ENCODE measurements at regions of chr2 and their contacts with region 1.

Region 1: GRCh38 chr2:101831351-101831865 is 133.9 kb downstream of the MAP4K4 start:
- DNase-seq: peak; percentile 46 to 78
- ATAC-seq: peak; percentile 92 to 94
- H3K4me3 ChIP-seq: no peak overlapping the region
- H3K27ac ChIP-seq: peak overlapping the region; percentile 23 to 70; a peak in 5 of 6 replicates
- H3K4me1 ChIP-seq: peaks cover 44% of the 10 kb centered on the region
- CTCF ChIP-seq: peak; percentile 84
- EP300 ChIP-seq: no peak
- POLR2A ChIP-seq: no peak
- RAD21 ChIP-seq: peak; percentile 75 to 79

Region 2: GRCh38 chr2:101419096-101419663 is 412.2 kb before region 1 on chr2:
- CTCF ChIA-PET with region 1: interaction called, 79 read pairs
- POLR2A ChIA-PET with region 1: no interaction called
- DNase-seq: peak; percentile 53 to 70
- ATAC-seq: peak; percentile 85 to 94; a peak in 5 of 6 replicates
- H3K4me3 ChIP-seq: no peak overlapping the region
- H3K27ac ChIP-seq: peak overlapping the region; percentile 1 to 52; a peak in 4 of 6 replicates
- H3K4me1 ChIP-seq: no peaks in the 10 kb centered on the region
- CTCF ChIP-seq: peak; percentile 90
- EP300 ChIP-seq: no peak
- POLR2A ChIP-seq: no peak
- RAD21 ChIP-seq: peak; percentile 92 to 94

Region 3: GRCh38 chr2:101473911-101474701 is 357.3 kb before region 1 on chr2:
- CTCF ChIA-PET with region 1: no interaction called
- POLR2A ChIA-PET with region 1: no interaction called
- DNase-seq: no peak
- ATAC-seq: peak in 1 of 2 experiments; percentile 40; a peak in 3 of 6 replicates
- H3K4me3 ChIP-seq: no peak overlapping the region
- H3K27ac ChIP-seq: no peak overlapping the region
- H3K4me1 ChIP-seq: no peaks in the 10 kb centered on the region
- CTCF ChIP-seq: no peak
- EP300 ChIP-seq: no peak
- POLR2A ChIP-seq: no peak
- RAD21 ChIP-seq: no peak

Region 4: DNA sequence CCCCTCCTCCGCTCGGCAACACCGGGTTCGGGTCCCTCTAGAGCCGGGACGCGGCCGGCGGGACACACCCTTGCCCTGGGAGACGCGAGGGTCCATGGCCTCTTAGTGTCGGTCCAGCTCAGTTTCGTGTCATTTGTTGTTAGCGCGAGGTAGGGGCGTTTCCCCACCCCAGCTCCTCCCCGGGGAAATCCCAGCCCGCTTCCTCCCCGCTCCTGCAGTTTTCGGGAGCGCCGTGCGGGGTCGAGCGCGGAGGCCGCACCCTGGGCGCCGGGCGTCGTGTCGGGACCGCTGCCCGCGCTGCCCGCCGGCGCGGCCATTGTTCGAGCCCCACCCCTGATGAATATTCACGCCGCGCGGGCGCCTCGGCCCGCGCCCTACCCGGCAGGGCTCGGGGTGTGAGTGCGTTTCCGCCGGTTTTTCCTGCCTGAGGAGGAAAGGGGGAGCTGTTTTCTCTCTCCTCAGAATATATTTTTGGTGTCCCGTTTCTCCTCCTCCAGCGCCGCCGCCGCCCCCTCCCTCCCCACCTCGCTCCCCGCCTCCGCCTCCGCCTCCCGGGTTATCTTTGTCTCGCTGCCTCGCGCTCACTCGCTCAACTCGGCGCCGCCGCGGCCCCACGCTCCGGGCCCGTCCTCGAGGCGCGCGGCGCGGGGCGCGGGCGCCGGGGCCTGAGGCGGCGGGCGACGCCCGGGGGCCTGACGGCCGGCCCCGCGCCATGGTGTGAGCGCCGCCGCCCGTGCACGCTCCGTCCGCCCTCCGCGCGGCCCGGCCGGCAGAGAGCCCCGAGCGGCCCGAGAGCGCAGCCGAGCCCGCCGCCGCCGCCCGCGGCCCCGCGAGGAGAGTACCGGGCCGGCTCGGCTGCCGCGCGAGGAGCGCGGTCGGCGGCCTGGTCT is 134.0 kb before region 1 on chr2 and contains the start of gene MAP4K4:
- CTCF ChIA-PET with region 1: interaction called, 14 read pairs
- POLR2A ChIA-PET with region 1: interaction called, 3 read pairs
- DNase-seq: peak; percentile 72 to 82
- ATAC-seq: peak; percentile 78 to 87
- H3K4me3 ChIP-seq: peak within 1 kb of the TSS; percentile 96
- H3K27ac ChIP-seq: peak within 1 kb of the TSS; percentile 91 to 93
- H3K4me1 ChIP-seq: peaks cover 13% of the 10 kb centered on the region
- CTCF ChIP-seq: peak; percentile 41
- EP300 ChIP-seq: no peak
- POLR2A ChIP-seq: peak; percentile 68
- RAD21 ChIP-seq: peak; percentile 42 to 60; a peak in 4 of 5 replicates
- polyA plus RNA-seq, gene MAP4K4: 82.2 and 91.4 TPM in 2 replicates

Region 5: DNA sequence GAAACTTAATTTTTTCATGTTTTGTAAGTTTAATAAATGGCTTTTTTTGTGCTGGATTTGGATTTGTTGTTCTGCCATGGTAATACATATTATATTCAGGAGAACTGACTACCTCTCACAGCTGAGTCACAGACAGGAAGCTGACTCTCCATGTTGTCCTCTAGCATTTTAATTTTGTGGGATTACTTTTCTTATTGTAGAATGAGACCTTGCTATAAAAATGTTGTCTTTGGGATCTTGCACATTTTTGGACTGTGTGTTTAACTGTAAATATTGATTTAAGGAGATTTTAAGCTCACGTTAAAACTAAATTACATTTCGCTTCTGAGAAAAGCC is 85.1 kb before region 1 on chr2:
- CTCF ChIA-PET with region 1: interaction called, 10 read pairs
- POLR2A ChIA-PET with region 1: no interaction called
- DNase-seq: no peak
- ATAC-seq: peak in 1 of 2 experiments; percentile 60; a peak in 2 of 6 replicates
- H3K4me3 ChIP-seq: no peak overlapping the region
- H3K27ac ChIP-seq: peak overlapping the region; percentile 78 to 84
- H3K4me1 ChIP-seq: peaks cover 70% of the 10 kb centered on the region
- CTCF ChIP-seq: no peak
- EP300 ChIP-seq: no peak
- POLR2A ChIP-seq: no peak
- RAD21 ChIP-seq: no peak

Region 6: GRCh38 chr2:101770726-101771125 is 60.7 kb before region 1 on chr2:
- CTCF ChIA-PET with region 1: interaction called, 26 read pairs
- POLR2A ChIA-PET with region 1: no interaction called
- DNase-seq: peak; percentile 36 to 67
- ATAC-seq: peak; percentile 68 to 69; a peak in 5 of 6 replicates
- H3K4me3 ChIP-seq: no peak overlapping the region
- H3K27ac ChIP-seq: peak overlapping the region in 1 of 2 experiments; percentile 20; a peak in 1 of 6 replicates
- H3K4me1 ChIP-seq: peaks cover 63% of the 10 kb centered on the region
- CTCF ChIP-seq: peak; percentile 54
- EP300 ChIP-seq: no peak
- POLR2A ChIP-seq: no peak
- RAD21 ChIP-seq: peak; percentile 53 to 54

Region 7: GRCh38 chr2:101793277-101793969 is 38.0 kb before region 1 on chr2:
- CTCF ChIA-PET with region 1: interaction called, 13 read pairs
- POLR2A ChIA-PET with region 1: no interaction called
- DNase-seq: peak in 1 of 2 experiments; percentile 30
- ATAC-seq: peak; percentile 50 to 75; a peak in 4 of 6 replicates
- H3K4me3 ChIP-seq: no peak overlapping the region
- H3K27ac ChIP-seq: no peak overlapping the region
- H3K4me1 ChIP-seq: peaks cover 13% of the 10 kb centered on the region
- CTCF ChIP-seq: 0 out of 3 replicates have a peak, but pooled peaks have one; percentile 8
- EP300 ChIP-seq: no peak
- POLR2A ChIP-seq: no peak
- RAD21 ChIP-seq: no peak

Region 8: DNA sequence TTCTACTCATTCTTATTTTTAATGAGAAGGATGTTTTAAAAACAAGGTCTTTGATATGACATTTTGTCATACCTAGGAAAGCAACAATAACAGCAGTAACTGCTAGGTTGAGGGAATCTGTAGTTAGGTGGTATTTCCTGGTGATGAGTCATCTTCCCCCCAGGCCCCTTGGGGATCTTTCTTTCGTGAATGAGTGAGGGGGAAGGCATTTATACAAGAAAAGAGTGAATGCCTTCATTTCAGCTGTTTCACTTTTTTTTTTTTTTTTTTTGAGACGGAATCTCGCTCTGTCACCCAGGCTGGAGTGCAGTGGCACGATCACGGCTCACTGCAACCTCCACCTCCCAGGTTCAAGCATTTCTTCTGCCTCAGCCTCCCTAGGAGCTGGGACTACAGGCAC is 25.3 kb before region 1 on chr2:
- CTCF ChIA-PET with region 1: interaction called, 10 read pairs
- POLR2A ChIA-PET with region 1: no interaction called
- DNase-seq: peak; percentile 38 to 53
- ATAC-seq: peak; percentile 52 to 69; a peak in 5 of 6 replicates
- H3K4me3 ChIP-seq: peak overlapping the region; percentile 11; the same call in 1 of the 3 replicates
- H3K27ac ChIP-seq: peak overlapping the region; percentile 57 to 88
- H3K4me1 ChIP-seq: peaks cover 63% of the 10 kb centered on the region
- CTCF ChIP-seq: no peak
- EP300 ChIP-seq: no peak
- POLR2A ChIP-seq: no peak
- RAD21 ChIP-seq: no peak